Posterior vena cava (tissue), 2 donors: ENCODE measurements at regions of chr2 and their contacts with region 1.

Region 1: DNA sequence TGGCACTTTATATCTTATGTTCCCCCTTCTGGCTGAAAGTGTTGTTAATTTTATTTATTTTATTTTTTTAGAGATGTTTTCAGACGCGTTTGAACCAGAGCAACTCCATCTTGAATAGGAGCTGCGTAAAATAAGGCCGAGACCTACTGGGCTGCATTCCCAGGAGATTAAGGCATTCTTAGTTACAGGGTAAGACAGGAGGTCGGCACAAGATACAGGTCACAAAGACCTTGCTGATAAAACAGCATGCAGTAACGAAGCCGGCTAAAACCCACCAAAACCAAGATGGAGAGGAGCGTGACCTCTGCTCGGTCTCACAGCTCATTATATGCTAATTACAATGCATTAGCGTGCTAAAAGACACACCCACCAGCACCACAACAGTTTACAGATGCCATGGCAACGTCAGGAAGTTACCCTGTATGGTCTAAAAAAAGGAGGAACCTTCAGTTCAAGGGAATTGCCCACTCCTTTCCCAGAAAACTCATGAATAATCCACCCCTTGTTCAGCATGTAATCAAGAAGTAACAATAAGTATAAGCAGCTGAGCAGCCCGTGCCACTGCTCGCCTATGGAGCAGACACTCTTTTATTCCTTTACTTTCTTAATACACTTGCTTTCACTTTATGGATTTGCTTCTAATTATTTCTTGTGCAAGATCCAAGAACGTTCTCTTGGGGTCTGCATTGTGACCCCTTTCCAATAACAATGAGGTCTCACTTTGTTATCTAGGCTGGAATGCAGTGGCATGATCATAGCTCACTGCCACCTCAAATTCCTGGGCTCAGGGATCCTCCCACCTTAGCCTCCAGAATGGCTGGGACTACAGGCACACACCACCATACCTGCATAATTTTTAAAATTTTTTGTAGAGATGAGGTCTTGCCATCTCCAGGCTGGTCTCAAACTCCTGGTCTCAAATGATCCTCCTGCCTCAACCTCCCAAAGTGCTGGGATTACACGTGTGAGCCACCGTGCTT is 55.9 kb downstream of the CACNB4 start:
- DNase-seq: no peak

Region 2: DNA sequence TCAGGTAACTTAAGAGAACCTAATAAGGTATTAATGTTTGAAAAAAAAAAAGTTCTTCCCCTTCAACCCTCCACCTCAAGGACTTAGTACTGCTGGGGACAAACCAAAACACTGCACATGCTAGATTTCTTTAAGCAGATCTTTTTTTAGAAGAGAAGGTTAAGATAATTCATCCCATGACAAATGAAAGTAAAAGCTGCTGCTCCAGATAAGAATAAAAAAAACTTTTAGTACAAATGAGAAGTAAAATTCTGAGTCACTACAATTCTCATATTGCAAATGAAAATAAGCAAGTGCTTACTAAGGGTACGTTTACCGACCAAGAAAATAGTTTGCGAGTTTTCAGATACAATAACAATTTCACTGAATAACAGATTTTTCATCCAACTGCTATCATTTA is 123.7 kb after region 1 on chr2:
- intact Hi-C with region 1: loop called in 1 of 2 experiments (anchors 5 kb)
- DNase-seq: no peak

Region 3: GRCh38 chr2:152219077-152219828 is 176.3 kb after region 1 on chr2:
- intact Hi-C with region 1: no loop called
- DNase-seq: no peak